ENCODE measurements at regions of chr6 and their contacts with region 1.

Region 1: DNA sequence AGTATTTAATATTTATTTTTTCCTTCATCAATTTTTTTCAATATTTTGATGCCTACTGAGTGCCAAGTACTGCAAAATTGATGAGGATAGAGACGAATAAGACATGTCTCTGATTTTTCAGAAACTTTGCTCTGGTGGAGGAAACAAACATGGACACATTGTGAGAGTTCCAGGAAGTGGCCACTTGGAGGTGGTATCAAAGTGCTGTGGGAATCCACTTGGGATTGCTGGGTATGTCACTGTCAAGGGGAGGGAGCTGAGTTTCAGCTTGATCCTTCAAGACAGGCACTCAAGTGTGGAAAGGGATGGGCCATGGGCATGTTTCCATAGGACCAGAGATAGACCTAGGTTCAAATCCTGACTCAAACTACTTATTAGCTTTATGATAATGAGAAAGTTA is 24.5 kb upstream of the ABCC10 start:
- DNase-seq: no peak
- CTCF ChIP-seq: no peak

Region 2: GRCh38 chr6:43263314-43264178 is 139.3 kb before region 1 on chr6:
- CTCF ChIA-PET with region 1: interaction called, 10 read pairs
- POLR2A ChIA-PET with region 1: no interaction called
- DNase-seq: peak; percentile 93
- CTCF ChIP-seq: peak; percentile 94

Region 3: GRCh38 chr6:43308101-43308989 is 94.5 kb before region 1 on chr6 and contains the start of gene CRIP3:
- CTCF ChIA-PET with region 1: interaction called, 10 read pairs
- POLR2A ChIA-PET with region 1: no interaction called
- DNase-seq: peak; percentile 57
- CTCF ChIP-seq: peak; percentile 27

Region 4: DNA sequence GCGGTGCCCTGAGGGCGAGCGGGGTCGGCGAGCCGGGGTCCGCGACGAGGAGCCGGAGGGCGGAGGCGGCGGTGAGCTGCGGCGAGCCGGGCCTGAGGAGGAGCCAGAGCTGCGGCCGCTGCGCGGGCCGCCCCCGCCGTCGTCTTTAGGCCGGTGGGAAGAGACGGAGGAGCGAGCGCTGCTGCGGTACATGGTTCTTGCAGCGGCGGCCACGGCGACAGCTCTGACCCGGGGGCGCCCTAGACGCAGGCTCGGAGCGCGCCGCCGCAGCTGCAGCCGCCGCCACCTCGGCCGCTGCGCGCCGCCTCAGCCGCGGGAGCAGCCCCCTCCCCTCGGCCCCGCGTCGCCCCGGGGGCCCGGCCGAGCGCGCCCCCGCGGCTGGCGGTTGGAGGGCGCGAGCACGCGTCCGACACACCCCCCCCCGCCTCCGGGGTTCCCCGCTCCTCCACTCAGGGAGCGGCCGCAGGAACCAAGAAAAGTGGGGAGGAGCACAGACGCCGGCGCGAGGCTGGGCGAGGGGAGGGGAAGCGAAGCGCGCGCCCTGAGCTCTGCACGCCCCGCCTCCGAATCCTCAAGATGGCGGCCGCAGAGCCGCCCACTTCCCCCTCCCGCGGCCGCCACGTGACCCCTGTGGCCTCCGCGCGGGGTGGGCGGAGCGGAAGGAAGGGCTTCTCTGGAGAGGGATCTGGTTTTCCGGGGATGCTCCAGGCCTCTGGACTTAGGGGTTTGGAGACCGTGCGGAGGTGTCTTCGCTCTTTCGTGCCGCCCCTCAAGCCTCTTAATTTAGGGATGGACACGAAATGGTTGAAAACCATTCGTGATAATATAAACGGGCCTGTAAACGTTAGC is 33.4 kb before region 1 on chr6 and contains the start of gene ZNF318:
- CTCF ChIA-PET with region 1: interaction called, 11 read pairs
- POLR2A ChIA-PET with region 1: interaction called, 3 read pairs
- DNase-seq: peak; percentile 94
- CTCF ChIP-seq: no peak

Region 5: DNA sequence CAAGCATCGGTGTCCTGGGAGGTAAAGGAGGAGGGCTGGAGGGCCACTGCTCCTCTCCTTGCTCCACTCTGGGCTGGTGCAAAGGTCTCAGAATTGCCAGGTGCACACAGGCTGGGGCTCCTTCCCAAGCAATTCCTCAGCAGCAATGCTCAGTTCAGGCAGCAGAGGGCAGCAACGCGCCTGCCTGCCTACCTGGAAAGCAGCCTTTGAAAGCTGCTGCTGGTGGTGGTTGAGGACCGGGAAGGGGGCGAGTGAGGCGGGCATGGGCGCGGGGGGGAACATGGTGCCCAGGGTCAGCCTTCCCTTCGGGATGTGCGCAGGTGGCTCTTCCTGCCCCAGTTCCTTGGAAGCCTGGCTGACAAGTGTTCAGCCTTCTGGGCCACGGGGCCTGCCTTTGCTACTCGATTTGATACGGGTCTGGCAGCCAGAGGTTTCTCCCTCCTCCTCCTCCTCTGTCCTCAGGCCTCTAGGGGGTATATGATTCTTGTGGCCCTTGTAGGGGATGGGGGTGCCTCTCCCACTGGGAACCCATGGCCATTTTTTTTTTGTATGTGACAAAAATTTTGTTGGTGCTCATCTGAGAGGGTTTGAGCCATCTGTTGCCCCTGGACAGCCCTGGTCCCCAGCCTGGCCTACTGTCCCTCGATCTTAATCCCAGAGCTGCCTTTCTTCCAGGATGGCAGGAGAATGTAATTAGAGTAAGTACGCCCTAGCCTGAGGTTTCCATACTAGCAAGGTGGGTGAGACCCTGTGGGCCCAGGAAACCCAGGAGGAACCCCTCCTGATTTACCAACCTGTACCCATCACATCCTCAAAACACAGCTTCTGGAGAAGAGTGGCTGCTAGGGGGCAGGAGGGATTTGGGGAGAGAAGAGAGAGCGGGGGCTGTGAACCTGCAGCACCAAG is 264.7 kb after region 1 on chr6:
- CTCF ChIA-PET with region 1: no interaction called
- POLR2A ChIA-PET with region 1: no interaction called
- DNase-seq: peak; percentile 86
- CTCF ChIP-seq: peak; percentile 100